ENCODE measurements at regions of chr5 and their contacts with region 1.

Region 1: DNA sequence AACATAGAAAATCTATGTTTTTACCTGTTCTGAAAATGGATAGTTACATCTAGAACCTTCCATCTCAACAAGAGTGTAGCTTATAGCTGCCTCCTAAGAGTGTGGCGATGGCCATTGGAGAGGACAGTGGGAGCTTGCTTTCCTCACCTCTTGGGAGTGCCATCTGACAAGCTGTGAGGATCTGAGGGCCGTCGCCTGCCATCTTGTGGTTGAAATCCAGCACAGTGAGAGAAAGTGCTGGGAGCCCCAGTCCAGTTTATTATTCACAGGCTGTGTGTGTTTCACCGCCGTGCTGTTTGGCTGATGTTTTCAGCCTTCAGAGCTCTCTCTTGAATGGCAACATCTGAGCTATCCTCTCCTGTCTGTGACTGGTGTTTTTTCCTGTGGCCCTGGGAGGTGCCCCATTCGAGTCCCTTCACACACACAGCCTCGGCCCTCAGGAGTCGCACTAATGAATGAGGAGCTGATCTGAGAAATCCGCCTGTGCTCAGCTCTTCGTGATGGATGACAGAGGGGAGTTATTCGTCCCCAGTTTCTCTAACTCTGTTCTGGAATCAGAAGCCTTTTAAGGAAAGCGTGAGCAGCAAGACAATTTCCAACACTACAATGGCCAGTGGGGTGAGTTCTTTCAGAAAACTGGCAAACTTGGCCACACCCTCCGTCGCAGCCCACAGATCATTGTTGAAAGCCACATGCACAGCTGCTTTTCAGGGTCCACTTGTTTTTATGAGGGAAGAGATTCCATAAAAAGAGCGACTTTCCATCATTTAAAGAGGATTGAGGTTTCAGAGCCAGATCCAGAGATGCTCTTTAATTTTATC is 170.3 kb downstream of the PDZD2 start:
- DNase-seq: peak; percentile 82
- H3K4me3 ChIP-seq: no peak overlapping the region
- H3K27ac ChIP-seq: no peak overlapping the region
- H3K4me1 ChIP-seq: peaks cover 0 to 13% of the 10 kb centered on the region in 2 experiments; a peak in 1 of 4 replicates
- H3K27me3 ChIP-seq: peaks cover 5% of the 10 kb centered on the region; the same call in 1 of the 2 replicates
- CTCF ChIP-seq: peak; percentile 65
- EP300 ChIP-seq: no peak
- RAD21 ChIP-seq: peak; percentile 98

Region 2: GRCh38 chr5:31581498-31582099 is 227.7 kb before region 1 on chr5:
- CTCF ChIA-PET with region 1: interaction called, 32 read pairs
- POLR2A ChIA-PET with region 1: no interaction called
- DNase-seq: peak; percentile 39
- H3K4me3 ChIP-seq: no peak overlapping the region
- H3K27ac ChIP-seq: no peak overlapping the region
- H3K4me1 ChIP-seq: no peaks in the 10 kb centered on the region
- H3K27me3 ChIP-seq: no peaks in the 10 kb centered on the region; the same call in 1 of the 2 replicates
- CTCF ChIP-seq: peak; percentile 68
- EP300 ChIP-seq: no peak
- RAD21 ChIP-seq: peak; percentile 91

Region 3: DNA sequence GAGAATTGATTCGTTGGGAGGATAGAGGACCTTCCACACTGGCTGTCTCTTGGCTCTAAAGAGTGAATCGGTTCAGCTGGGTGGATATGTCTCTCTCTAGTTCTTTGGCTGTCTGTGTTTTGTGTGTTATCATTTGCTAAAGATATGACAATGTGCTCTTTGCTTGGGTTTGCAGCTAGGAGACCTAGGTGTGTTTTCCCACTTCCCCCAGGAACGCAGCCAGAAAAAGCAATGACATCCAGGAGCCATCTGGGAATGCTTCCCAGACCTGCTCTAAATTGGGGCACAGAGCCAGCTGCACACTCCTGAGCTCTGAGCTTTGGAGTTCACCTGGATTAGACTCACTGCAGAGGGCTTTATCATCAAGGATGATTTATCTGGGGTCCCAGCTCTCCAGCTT is 183.1 kb before region 1 on chr5:
- CTCF ChIA-PET with region 1: interaction called, 10 read pairs
- POLR2A ChIA-PET with region 1: no interaction called
- DNase-seq: peak; percentile 28
- H3K4me3 ChIP-seq: no peak overlapping the region
- H3K27ac ChIP-seq: peak overlapping the region in 1 of 2 experiments; percentile 39; a peak in 1 of 4 replicates
- H3K4me1 ChIP-seq: peaks cover 0 to 24% of the 10 kb centered on the region in 2 experiments; a peak in 2 of 4 replicates
- H3K27me3 ChIP-seq: peaks cover 8% of the 10 kb centered on the region; the same call in 1 of the 2 replicates
- CTCF ChIP-seq: no peak
- EP300 ChIP-seq: no peak
- RAD21 ChIP-seq: no peak

Region 4: GRCh38 chr5:31638748-31639418 is 170.4 kb before region 1 on chr5 and contains the start of gene PDZD2:
- CTCF ChIA-PET with region 1: interaction called, 60 read pairs
- POLR2A ChIA-PET with region 1: no interaction called
- DNase-seq: peak; percentile 95
- H3K4me3 ChIP-seq: peak within 1 kb of the TSS; percentile 60 to 93
- H3K27ac ChIP-seq: peak within 1 kb of the TSS in 1 of 2 experiments; percentile 83; a peak in 2 of 4 replicates
- H3K4me1 ChIP-seq: peaks cover 0 to 20% of the 10 kb centered on the region in 2 experiments; a peak in 1 of 4 replicates
- H3K27me3 ChIP-seq: peaks cover 33% of the 10 kb centered on the region
- CTCF ChIP-seq: peak; percentile 53
- EP300 ChIP-seq: peak in 1 of 2 experiments; percentile 10; a peak in 1 of 4 replicates
- RAD21 ChIP-seq: peak; percentile 59
- polyA plus RNA-seq, gene PDZD2: 0.06 and 0.13 TPM in 2 replicates

Region 5: DNA sequence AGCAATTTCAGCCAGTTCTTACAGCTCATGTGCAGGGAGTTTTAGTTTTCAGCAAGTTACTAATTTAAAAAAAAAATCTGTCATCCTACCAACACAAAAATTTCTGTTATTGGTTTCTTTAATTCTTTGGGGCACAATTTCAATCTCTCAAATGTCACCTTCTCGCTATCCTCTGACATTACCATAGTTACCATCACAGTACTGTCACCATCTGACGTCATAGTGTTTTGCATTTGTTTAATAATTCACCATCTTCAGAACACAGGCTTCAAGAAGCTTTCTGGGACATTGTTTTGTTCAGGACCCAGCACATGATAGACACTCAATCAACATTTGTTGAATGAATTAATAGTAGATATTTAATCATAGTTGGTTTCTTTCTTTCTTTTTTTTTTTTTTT is 15.3 kb before region 1 on chr5:
- CTCF ChIA-PET with region 1: interaction called, 21 read pairs
- POLR2A ChIA-PET with region 1: no interaction called
- DNase-seq: no peak
- H3K4me3 ChIP-seq: no peak overlapping the region
- H3K27ac ChIP-seq: no peak overlapping the region
- H3K4me1 ChIP-seq: peaks cover 0 to 6% of the 10 kb centered on the region in 2 experiments; a peak in 1 of 4 replicates
- H3K27me3 ChIP-seq: no peaks in the 10 kb centered on the region; the same call in 1 of the 2 replicates
- CTCF ChIP-seq: no peak
- EP300 ChIP-seq: no peak
- RAD21 ChIP-seq: no peak

Region 6: DNA sequence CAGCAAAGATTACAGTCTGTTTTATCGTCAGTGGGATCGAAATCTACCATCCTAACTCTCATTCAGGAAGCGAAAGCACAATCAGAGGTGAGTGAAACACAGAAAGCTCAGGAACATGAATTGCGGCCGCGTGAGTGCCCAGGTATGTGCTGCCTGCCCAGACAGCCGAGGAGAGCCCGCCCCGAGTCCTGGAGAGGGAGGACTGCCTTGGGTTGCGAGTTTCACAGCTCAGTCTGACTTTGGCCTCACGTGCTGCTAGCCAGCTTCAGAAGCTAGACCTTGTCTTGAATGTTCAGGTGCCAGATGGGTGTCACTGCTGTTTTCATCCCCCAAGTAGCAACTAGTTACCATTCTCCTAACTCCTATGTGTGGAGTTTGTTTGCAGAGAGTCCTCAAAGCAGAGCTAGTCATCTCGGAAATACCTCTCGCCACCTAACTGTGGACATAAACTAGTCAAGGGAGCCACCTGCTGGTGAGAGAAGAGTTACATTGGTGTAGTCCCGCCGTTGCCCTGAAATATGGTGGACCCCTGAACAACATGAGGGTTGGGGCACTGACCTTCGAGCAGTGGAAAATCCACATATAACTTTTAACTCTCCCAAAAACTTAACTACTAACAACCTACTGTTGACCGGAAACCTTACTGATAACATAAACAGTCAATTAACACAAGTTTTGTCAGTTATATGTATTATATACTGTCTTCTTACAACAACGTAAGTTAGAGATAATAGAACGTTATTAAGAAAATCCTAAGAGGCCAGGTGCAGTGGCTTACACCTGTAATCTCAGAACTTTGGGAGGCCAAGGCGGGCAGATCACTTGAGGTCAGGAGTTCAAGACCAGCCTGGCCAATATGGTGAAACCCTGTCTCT is 283.9 kb after region 1 on chr5:
- CTCF ChIA-PET with region 1: interaction called, 21 read pairs
- POLR2A ChIA-PET with region 1: no interaction called
- DNase-seq: peak; percentile 81
- H3K4me3 ChIP-seq: peak overlapping the region in 1 of 2 experiments; percentile 50; a peak in 1 of 4 replicates
- H3K27ac ChIP-seq: no peak overlapping the region
- H3K4me1 ChIP-seq: peaks cover 0 to 4% of the 10 kb centered on the region in 2 experiments; a peak in 1 of 4 replicates
- H3K27me3 ChIP-seq: no peaks in the 10 kb centered on the region
- CTCF ChIP-seq: peak; percentile 77
- EP300 ChIP-seq: no peak
- RAD21 ChIP-seq: peak; percentile 89

Measured in SK-N-SH (cell line).